MCF 10A (cell line): ENCODE measurements at regions of chr15 and their contacts with region 1.

Region 1: GRCh38 chr15:58770857-58771620 is at the start of gene MINDY2:
- DNase-seq: peak; percentile 98
- H3K4me3 Mint-ChIP-seq: no peak within 1 kb of the TSS
- H3K27ac Mint-ChIP-seq: peak within 1 kb of the TSS; percentile 97
- H3K4me1 Mint-ChIP-seq: peaks cover 11% of the 10 kb centered on the region
- H3K27me3 Mint-ChIP-seq: no peaks in the 10 kb centered on the region
- CTCF ChIP-seq: peak; percentile 28
- total RNA-seq, gene MINDY2: 18.8 and 21.9 TPM in 2 replicates

Region 2: GRCh38 chr15:58260911-58261267 is 510.1 kb before region 1 on chr15:
- CTCF ChIA-PET with region 1: no interaction called
- POLR2A ChIA-PET with region 1: interaction called, 14 read pairs
- intact Hi-C with region 1: no loop called
- DNase-seq: peak; percentile 97
- H3K4me3 Mint-ChIP-seq: no peak overlapping the region
- H3K27ac Mint-ChIP-seq: peak overlapping the region; percentile 85
- H3K4me1 Mint-ChIP-seq: peaks cover 38% of the 10 kb centered on the region
- H3K27me3 Mint-ChIP-seq: no peaks in the 10 kb centered on the region
- CTCF ChIP-seq: no peak

Region 3: GRCh38 chr15:58738046-58738707 is 32.9 kb before region 1 on chr15:
- CTCF ChIA-PET with region 1: interaction called, 9 read pairs
- POLR2A ChIA-PET with region 1: interaction called, 21 read pairs
- intact Hi-C with region 1: no loop called
- DNase-seq: peak; percentile 36
- H3K4me3 Mint-ChIP-seq: no peak overlapping the region
- H3K27ac Mint-ChIP-seq: peak overlapping the region; percentile 53
- H3K4me1 Mint-ChIP-seq: peaks cover 32% of the 10 kb centered on the region
- H3K27me3 Mint-ChIP-seq: no peaks in the 10 kb centered on the region
- CTCF ChIP-seq: no peak

Region 4: GRCh38 chr15:58793862-58794261 is 22.8 kb after region 1 on chr15:
- CTCF ChIA-PET with region 1: interaction called, 15 read pairs
- POLR2A ChIA-PET with region 1: interaction called, 87 read pairs
- intact Hi-C with region 1: no loop called
- DNase-seq: peak; percentile 87
- H3K4me3 Mint-ChIP-seq: peak overlapping the region; percentile 46
- H3K27ac Mint-ChIP-seq: peak overlapping the region; percentile 98
- H3K4me1 Mint-ChIP-seq: peaks cover 29% of the 10 kb centered on the region
- H3K27me3 Mint-ChIP-seq: no peaks in the 10 kb centered on the region
- CTCF ChIP-seq: no peak

Region 5: GRCh38 chr15:58924327-58924726 is 153.3 kb after region 1 on chr15:
- CTCF ChIA-PET with region 1: no interaction called
- POLR2A ChIA-PET with region 1: interaction called, 11 read pairs
- intact Hi-C with region 1: no loop called
- DNase-seq: peak; percentile 37
- H3K4me3 Mint-ChIP-seq: no peak overlapping the region
- H3K27ac Mint-ChIP-seq: no peak overlapping the region
- H3K4me1 Mint-ChIP-seq: no peaks in the 10 kb centered on the region
- H3K27me3 Mint-ChIP-seq: no peaks in the 10 kb centered on the region
- CTCF ChIP-seq: no peak

Region 6: GRCh38 chr15:59528965-59529402 is 757.9 kb after region 1 on chr15:
- CTCF ChIA-PET with region 1: no interaction called
- POLR2A ChIA-PET with region 1: interaction called, 3 read pairs
- intact Hi-C with region 1: loop called (anchors 2 kb)
- DNase-seq: peak; percentile 92
- H3K4me3 Mint-ChIP-seq: no peak overlapping the region
- H3K27ac Mint-ChIP-seq: no peak overlapping the region
- H3K4me1 Mint-ChIP-seq: peaks cover 6% of the 10 kb centered on the region
- H3K27me3 Mint-ChIP-seq: no peaks in the 10 kb centered on the region
- CTCF ChIP-seq: peak; percentile 88